A549 (cell line): ENCODE measurements at regions of chr12 and their contacts with region 1.

Region 1: GRCh38 chr12:118175823-118176447 is 40.0 kb downstream of the PEBP1 start:
- DNase-seq: no peak
- ATAC-seq: no peak
- H3K4me3 ChIP-seq: no peak overlapping the region
- H3K27ac ChIP-seq: no peak overlapping the region
- H3K4me1 ChIP-seq: no peaks in the 10 kb centered on the region
- CTCF ChIP-seq: no peak
- EP300 ChIP-seq: no peak
- POLR2A ChIP-seq: no peak
- RAD21 ChIP-seq: no peak

Region 2: DNA sequence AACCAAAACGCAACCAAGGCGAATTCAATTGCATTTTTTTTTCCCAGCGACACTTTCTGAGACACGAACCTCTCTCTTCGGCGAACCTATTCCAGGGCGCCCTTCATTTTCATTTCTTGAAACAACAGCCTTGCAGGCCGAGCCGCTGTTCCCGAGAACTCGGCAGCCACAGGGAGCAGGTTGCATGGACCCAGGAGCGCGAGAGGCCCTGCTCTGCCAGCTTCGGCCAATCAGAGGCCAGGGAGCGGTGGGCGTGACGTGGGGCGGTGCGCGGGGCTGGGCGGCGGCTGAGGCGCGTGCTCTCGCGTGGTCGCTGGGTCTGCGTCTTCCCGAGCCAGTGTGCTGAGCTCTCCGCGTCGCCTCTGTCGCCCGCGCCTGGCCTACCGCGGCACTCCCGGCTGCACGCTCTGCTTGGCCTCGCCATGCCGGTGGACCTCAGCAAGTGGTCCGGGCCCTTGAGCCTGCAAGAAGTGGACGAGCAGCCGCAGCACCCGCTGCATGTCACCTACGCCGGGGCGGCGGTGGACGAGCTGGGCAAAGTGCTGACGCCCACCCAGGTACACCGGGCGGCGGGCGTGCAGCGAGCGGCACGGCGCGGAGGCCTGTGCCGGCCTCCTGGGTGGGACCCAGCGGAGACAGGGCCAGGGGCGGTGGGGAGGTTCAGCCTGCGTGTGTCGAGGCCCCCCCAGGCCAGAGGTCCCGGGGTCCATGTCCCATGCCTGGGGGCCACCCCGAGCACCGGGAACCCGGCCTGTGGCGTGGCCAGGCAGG is 40.0 kb before region 1 on chr12 and contains the start of gene PEBP1:
- CTCF ChIA-PET with region 1: no interaction called
- POLR2A ChIA-PET with region 1: no interaction called
- DNase-seq: peak; percentile 96
- ATAC-seq: peak; percentile 99
- H3K4me3 ChIP-seq: peak within 1 kb of the TSS; percentile 95
- H3K27ac ChIP-seq: peak within 1 kb of the TSS; percentile 90 to 96
- H3K4me1 ChIP-seq: peaks cover 25% of the 10 kb centered on the region
- CTCF ChIP-seq: no peak
- EP300 ChIP-seq: no peak
- POLR2A ChIP-seq: peak; percentile 87
- RAD21 ChIP-seq: no peak
- polyA plus RNA-seq, gene PEBP1: 152 and 169 TPM in 2 replicates

Region 3: DNA sequence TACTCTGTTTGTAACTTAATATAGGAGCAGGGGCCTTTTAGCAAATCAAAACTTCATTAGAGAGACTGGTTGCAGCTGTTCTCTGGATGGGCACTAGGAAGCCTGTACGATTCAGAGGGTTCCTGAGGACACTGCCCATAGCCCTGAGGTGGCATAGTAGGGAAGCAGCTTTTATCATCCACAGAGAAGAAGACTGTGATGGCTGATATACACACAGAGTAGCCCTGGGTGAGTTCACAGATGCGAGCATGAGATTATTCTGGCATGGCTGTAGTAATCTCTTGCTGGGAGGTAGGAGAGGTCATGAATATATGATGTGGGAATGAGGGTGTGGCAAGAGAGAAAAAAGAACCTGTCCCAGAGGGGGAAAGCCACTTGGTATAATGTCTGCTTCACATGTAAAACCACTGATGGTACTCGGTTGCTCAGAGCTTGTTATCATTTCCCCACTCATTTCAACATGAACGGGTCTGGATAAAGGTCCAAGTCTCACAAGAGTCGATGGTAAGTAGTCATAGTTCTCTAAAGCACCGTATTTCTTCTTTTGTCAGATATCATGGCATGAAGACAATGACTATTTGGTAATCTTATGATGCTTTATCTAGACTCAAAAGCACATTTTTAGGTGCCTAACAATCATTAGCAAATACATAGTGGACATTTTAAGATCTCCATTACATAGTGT is 12.0 kb after region 1 on chr12:
- CTCF ChIA-PET with region 1: interaction called, 27 read pairs
- POLR2A ChIA-PET with region 1: no interaction called
- DNase-seq: no peak
- ATAC-seq: no peak
- H3K4me3 ChIP-seq: no peak overlapping the region
- H3K27ac ChIP-seq: no peak overlapping the region
- H3K4me1 ChIP-seq: no peaks in the 10 kb centered on the region
- CTCF ChIP-seq: no peak
- EP300 ChIP-seq: no peak
- POLR2A ChIP-seq: no peak
- RAD21 ChIP-seq: no peak

Region 4: DNA sequence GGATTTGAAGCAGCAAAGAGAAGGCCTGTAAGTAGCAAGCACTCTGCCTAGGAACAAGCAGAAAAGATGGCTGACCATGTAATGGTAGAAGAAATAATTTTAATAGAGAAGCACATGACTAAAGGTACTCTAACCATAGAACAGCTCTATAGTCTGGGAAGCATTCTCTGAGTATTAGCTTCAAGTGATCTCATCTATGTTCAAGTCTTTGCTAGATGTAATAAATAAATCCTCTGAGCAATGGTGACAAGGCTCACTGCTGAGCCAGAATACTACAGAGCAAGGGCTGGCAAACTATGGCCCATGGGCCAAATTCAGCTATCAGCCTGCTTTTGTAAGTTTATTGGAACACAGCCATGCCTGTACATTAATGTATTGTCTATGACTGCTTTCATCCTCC is 44.8 kb after region 1 on chr12:
- CTCF ChIA-PET with region 1: no interaction called
- POLR2A ChIA-PET with region 1: no interaction called
- DNase-seq: no peak
- ATAC-seq: no peak
- H3K4me3 ChIP-seq: no peak overlapping the region
- H3K27ac ChIP-seq: no peak overlapping the region
- H3K4me1 ChIP-seq: no peaks in the 10 kb centered on the region
- CTCF ChIP-seq: no peak
- EP300 ChIP-seq: no peak
- POLR2A ChIP-seq: no peak
- RAD21 ChIP-seq: no peak